Right ventricle myocardium inferior (tissue), 1 donor: ENCODE measurements at regions of chr2 and their contacts with region 1.

Region 1: GRCh38 chr2:237413777-237414661 is at the start of gene COL6A3:
- DNase-seq: peak; percentile 78
- ATAC-seq: peak; percentile 80
- total RNA-seq, gene COL6A3: 84.5 TPM

Region 2: DNA sequence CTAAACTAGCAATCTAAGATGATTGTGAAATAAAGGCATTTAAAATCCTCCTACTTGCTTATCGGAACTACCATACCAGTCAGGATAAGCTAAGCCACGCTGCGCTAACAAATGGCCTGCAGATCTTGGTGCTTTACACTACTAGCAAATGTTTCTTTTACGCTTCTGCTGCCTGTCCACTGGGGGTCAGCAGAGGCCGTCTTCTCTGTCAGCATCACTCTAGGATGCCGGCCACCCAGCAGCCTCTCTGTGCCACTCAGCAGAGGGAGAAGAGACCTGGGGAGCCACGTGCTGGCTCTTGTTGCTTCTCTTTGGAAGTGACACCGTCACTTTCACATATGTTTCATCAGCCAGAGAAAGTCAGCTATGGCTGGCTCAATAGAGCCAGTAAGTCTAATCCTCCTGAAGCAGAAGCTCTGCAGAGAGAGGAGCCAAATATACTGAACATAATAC is 291.8 kb before region 1 on chr2:
- intact Hi-C with region 1: loop called (anchors 5 kb)
- DNase-seq: peak; percentile 73
- ATAC-seq: peak; percentile 83

Region 3: GRCh38 chr2:237154082-237154638 is 259.9 kb before region 1 on chr2:
- intact Hi-C with region 1: loop called (anchors 5 kb)
- DNase-seq: no peak
- ATAC-seq: no peak